ENCODE measurements at regions of chr2 and their contacts with region 1.

Region 1: DNA sequence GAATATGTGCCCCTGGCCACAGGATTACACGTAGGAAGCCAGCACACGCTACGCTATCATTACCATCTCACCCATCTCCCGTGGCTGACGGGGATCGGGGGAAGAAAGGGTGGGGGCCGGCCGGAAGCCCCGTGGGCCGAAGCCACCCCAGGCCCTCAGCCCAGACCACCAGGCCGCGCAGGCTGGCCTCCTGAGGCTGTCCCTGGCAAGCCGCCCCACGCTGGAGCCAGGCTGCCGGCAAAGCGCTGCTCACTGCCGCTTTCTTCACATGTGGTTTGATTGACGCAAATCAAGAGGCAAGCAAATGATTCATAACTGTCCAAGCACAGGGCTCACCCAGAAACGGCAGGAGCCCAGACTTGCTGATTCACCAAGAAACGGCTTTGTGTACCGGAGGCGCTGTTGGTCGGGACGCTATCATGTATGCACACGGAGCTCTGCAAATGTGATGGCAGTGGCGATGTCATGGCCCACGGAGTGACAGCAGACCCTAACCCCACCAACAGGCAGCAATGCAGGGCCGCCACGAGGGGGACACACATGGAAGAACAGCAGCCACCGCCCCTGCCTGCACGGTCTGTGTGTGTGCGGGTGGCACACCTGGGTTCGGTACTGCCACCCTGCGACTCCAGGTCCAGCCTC is 125.7 kb downstream of the HDAC4 start:
- DNase-seq: peak; percentile 46
- H3K4me3 ChIP-seq: no peak overlapping the region
- H3K27ac ChIP-seq: peak overlapping the region; percentile 68
- H3K4me1 ChIP-seq: no peaks in the 10 kb centered on the region
- H3K27me3 ChIP-seq: no peaks in the 10 kb centered on the region
- CTCF ChIP-seq: no peak

Region 2: GRCh38 chr2:239318790-239319661 is 43.9 kb after region 1 on chr2:
- intact Hi-C with region 1: no loop called
- DNase-seq: peak; percentile 51
- H3K4me3 ChIP-seq: no peak overlapping the region
- H3K27ac ChIP-seq: no peak overlapping the region
- H3K4me1 ChIP-seq: peaks cover 7% of the 10 kb centered on the region
- H3K27me3 ChIP-seq: no peaks in the 10 kb centered on the region
- CTCF ChIP-seq: no peak

Region 3: DNA sequence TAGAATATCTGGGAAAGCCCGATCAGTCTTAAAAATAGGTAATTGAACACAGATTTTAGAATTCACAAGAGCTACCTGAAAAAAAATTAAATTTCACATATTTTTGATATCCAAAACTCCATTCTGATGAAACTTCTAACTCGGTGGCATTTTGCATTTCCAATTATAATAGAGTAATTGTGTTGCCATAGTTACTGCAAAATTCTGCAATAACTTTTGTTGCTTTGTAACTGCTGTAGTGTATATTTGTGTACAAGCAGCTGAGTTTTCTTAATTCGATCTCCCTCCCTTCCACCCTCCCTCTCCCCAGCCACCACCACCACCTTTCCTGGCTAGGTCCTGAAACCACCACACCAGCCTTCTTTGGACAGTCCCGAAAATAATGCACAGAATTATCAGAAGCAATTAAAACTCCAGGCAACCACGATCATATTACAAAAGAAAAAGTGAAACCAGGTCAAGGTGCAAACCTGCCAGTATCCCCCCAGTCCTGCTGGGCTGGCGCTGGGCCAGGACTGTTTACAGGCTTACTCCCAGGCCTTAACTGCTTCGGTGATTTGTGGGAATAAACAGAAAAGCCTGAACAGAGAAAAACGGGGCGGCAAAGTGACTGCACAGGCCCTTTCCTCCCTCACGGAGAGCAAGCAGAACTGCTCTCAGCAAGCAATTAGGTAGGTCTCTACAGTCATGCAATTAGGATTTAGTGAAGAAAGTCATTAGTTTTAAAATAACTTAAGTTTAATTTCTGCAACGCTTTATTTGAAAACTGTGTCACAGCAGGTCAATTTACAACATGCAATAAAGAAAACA is 124.2 kb after region 1 on chr2:
- intact Hi-C with region 1: loop called (anchors 5 kb)
- DNase-seq: peak; percentile 57
- H3K4me3 ChIP-seq: peak overlapping the region; percentile 46
- H3K27ac ChIP-seq: peak overlapping the region; percentile 13
- H3K4me1 ChIP-seq: no peaks in the 10 kb centered on the region
- H3K27me3 ChIP-seq: no peaks in the 10 kb centered on the region
- CTCF ChIP-seq: no peak